Activated CD8-positive, alpha-beta T cell treated with anti-CD3 and anti-CD28 coated beads, Interleukin-2, amount 10 ng/mL, durations not matched to agents 7 days and 5 days (primary cell): ENCODE measurements at regions of chr17 and their contacts with region 1.

Region 1: DNA sequence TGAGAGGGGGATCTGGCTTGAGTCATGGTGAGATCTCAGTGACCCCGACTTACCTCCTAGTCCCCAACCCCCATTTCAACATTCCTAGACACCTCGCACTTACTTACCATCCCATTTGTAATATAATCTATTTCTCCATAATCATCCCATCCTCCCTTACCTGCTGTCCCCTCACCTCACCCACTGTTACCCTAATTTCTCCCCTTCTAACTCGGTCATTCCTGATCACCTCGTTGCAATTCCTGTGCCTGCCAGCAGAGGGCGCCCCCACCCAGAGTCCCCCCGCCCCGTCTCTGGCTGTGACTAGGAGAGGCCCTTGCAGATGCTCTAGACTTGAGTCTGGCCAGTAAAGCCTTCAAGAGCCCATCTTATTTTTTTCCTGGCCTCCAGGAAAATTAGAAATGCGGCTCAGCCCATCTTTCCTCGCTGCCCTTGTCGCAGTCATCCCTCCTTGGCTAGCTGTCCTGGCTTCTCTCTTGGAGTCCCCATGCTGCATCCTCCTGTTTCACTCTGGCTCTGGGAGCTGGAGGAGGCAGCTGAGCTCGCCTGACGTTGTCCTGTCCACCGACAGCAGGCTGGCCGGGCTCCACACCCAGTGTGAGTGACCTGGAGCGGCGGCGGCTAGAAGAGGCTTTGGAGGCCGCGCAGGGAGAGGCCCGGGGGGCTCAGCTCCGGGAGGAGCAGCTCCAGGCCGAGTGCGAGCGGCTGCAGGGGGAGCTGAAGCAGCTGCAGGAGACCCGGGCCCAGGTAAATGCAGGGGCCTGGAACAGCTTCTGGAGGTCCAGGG is 5.0 kb downstream of the TBKBP1 start:
- DNase-seq: peak; percentile 87
- ATAC-seq: peak; percentile 30
- H3K4me3 Mint-ChIP-seq: no peak overlapping the region
- H3K27ac Mint-ChIP-seq: peak overlapping the region; percentile 65
- H3K4me1 Mint-ChIP-seq: peaks cover 54% of the 10 kb centered on the region
- H3K27me3 Mint-ChIP-seq: no peaks in the 10 kb centered on the region

Region 2: GRCh38 chr17:47633996-47634395 is 64.9 kb before region 1 on chr17:
- CTCF ChIA-PET with region 1: no interaction called
- POLR2A ChIA-PET with region 1: no interaction called
- DNase-seq: no peak
- ATAC-seq: no peak
- H3K4me3 Mint-ChIP-seq: no peak overlapping the region
- H3K27ac Mint-ChIP-seq: no peak overlapping the region
- H3K4me1 Mint-ChIP-seq: peaks cover 25% of the 10 kb centered on the region
- H3K27me3 Mint-ChIP-seq: no peaks in the 10 kb centered on the region

Region 3: GRCh38 chr17:47649153-47649971 is 49.6 kb before region 1 on chr17 and contains the start of gene KPNB1:
- CTCF ChIA-PET with region 1: interaction called, 21 read pairs
- POLR2A ChIA-PET with region 1: interaction called, 3 read pairs
- DNase-seq: peak; percentile 99
- ATAC-seq: peak; percentile 89
- H3K4me3 Mint-ChIP-seq: peak within 1 kb of the TSS; percentile 97
- H3K27ac Mint-ChIP-seq: peak within 1 kb of the TSS; percentile 100
- H3K4me1 Mint-ChIP-seq: peaks cover 41% of the 10 kb centered on the region
- H3K27me3 Mint-ChIP-seq: no peaks in the 10 kb centered on the region
- total RNA-seq, gene KPNB1: 413 to 427 TPM

Region 4: GRCh38 chr17:47687748-47688147 is 11.2 kb before region 1 on chr17:
- CTCF ChIA-PET with region 1: interaction called, 12 read pairs
- POLR2A ChIA-PET with region 1: interaction called, 6 read pairs
- DNase-seq: no peak
- ATAC-seq: no peak
- H3K4me3 Mint-ChIP-seq: no peak overlapping the region
- H3K27ac Mint-ChIP-seq: no peak overlapping the region
- H3K4me1 Mint-ChIP-seq: peaks cover 12% of the 10 kb centered on the region
- H3K27me3 Mint-ChIP-seq: no peaks in the 10 kb centered on the region

Region 5: GRCh38 chr17:47720754-47721533 is 22.0 kb after region 1 on chr17:
- CTCF ChIA-PET with region 1: interaction called, 474 read pairs
- POLR2A ChIA-PET with region 1: interaction called, 24 read pairs
- DNase-seq: peak; percentile 90
- ATAC-seq: peak; percentile 77
- H3K4me3 Mint-ChIP-seq: peak overlapping the region; percentile 60
- H3K27ac Mint-ChIP-seq: peak overlapping the region; percentile 88
- H3K4me1 Mint-ChIP-seq: peaks cover 81% of the 10 kb centered on the region
- H3K27me3 Mint-ChIP-seq: no peaks in the 10 kb centered on the region

Region 6: GRCh38 chr17:47789611-47790561 is 90.9 kb after region 1 on chr17:
- CTCF ChIA-PET with region 1: interaction called, 10 read pairs
- POLR2A ChIA-PET with region 1: no interaction called
- DNase-seq: peak; percentile 61
- ATAC-seq: peak; percentile 90
- H3K4me3 Mint-ChIP-seq: peak overlapping the region; percentile 57
- H3K27ac Mint-ChIP-seq: no peak overlapping the region
- H3K4me1 Mint-ChIP-seq: peaks cover 10% of the 10 kb centered on the region
- H3K27me3 Mint-ChIP-seq: peaks cover 48% of the 10 kb centered on the region